ENCODE measurements at regions of chr11 and their contacts with region 1.

Region 1: GRCh38 chr11:114439229-114440120 is at the start of gene REXO2:
- DNase-seq: peak; percentile 87
- H3K4me3 Mint-ChIP-seq: peak within 1 kb of the TSS; percentile 100
- H3K27ac Mint-ChIP-seq: peak within 1 kb of the TSS; percentile 98
- H3K4me1 Mint-ChIP-seq: peaks cover 26% of the 10 kb centered on the region
- H3K27me3 Mint-ChIP-seq: no peaks in the 10 kb centered on the region
- CTCF ChIP-seq: no peak
- total RNA-seq, gene REXO2: 69.1 and 74.2 TPM in 2 replicates

Region 2: GRCh38 chr11:113908098-113908497 is 531.4 kb before region 1 on chr11:
- CTCF ChIA-PET with region 1: no interaction called
- intact Hi-C with region 1: no loop called
- DNase-seq: no peak
- H3K4me3 Mint-ChIP-seq: no peak overlapping the region
- H3K27ac Mint-ChIP-seq: no peak overlapping the region
- H3K4me1 Mint-ChIP-seq: no peaks in the 10 kb centered on the region
- H3K27me3 Mint-ChIP-seq: peaks cover 25% of the 10 kb centered on the region
- CTCF ChIP-seq: no peak

Region 3: GRCh38 chr11:114295676-114296604 is 143.5 kb before region 1 on chr11 and contains the start of gene NNMT:
- CTCF ChIA-PET with region 1: no interaction called
- intact Hi-C with region 1: loop called (anchors 5 kb)
- DNase-seq: peak; percentile 65
- H3K4me3 Mint-ChIP-seq: peak within 1 kb of the TSS; percentile 74
- H3K27ac Mint-ChIP-seq: peak within 1 kb of the TSS; percentile 99
- H3K4me1 Mint-ChIP-seq: peaks cover 53% of the 10 kb centered on the region
- H3K27me3 Mint-ChIP-seq: no peaks in the 10 kb centered on the region
- CTCF ChIP-seq: no peak
- total RNA-seq, gene NNMT: 52.7 and 116 TPM in 2 replicates

Region 4: DNA sequence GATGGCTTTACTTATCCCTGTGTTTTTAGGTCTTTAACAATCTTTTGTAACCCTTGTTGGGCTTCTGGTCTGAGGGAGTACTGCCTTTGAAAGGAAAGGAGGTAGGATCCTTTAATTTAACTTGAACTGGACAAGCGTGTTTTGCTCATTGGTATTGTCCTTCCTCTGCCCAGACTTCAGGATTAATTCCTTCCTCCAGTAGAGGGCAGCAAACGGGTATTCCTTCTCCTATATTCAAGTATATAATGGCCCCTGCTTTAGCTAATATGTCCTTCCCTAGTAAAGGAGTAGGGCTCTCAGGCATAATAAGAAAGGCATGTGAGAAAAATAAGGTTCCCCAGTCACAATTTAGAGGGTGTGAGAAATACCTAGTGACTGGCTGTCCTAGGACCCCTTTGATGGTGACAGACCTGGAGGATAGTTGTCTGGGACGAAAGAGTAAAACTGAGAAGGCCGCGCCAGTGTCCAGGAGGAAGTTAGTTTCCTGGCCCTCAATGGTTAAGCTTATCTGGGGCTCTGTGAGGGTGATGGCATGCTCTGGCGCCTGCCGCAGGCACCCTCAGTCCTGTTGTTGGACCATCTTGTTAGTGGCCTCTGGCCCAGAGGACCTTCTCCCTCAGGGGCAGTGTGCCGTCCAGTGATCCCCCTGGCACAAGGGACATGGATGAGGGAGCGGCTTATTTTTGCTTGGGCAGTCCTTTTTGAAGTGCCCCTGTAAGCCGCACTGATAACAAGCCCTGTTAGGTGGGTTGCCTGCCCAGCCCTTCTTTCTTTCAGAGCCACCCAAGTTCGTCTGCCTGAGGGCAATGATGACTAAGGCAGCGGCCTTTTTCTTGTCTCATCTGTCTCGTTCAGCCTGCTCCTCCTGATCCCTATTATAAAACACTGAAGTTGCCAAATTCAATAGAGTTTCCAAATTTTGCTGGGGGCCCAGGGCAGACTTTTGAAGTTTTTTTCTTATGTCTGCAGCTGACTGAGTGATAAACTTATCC is 91.0 kb before region 1 on chr11:
- CTCF ChIA-PET with region 1: no interaction called
- intact Hi-C with region 1: loop called (anchors 2 kb)
- DNase-seq: peak; percentile 59
- H3K4me3 Mint-ChIP-seq: no peak overlapping the region
- H3K27ac Mint-ChIP-seq: no peak overlapping the region
- H3K4me1 Mint-ChIP-seq: no peaks in the 10 kb centered on the region
- H3K27me3 Mint-ChIP-seq: no peaks in the 10 kb centered on the region
- CTCF ChIP-seq: peak; percentile 19

Region 5: GRCh38 chr11:114452399-114452798 is 12.9 kb after region 1 on chr11:
- CTCF ChIA-PET with region 1: no interaction called
- intact Hi-C with region 1: no loop called
- DNase-seq: no peak
- H3K4me3 Mint-ChIP-seq: no peak overlapping the region
- H3K27ac Mint-ChIP-seq: no peak overlapping the region
- H3K4me1 Mint-ChIP-seq: peaks cover 5% of the 10 kb centered on the region
- H3K27me3 Mint-ChIP-seq: no peaks in the 10 kb centered on the region
- CTCF ChIP-seq: no peak

Region 6: DNA sequence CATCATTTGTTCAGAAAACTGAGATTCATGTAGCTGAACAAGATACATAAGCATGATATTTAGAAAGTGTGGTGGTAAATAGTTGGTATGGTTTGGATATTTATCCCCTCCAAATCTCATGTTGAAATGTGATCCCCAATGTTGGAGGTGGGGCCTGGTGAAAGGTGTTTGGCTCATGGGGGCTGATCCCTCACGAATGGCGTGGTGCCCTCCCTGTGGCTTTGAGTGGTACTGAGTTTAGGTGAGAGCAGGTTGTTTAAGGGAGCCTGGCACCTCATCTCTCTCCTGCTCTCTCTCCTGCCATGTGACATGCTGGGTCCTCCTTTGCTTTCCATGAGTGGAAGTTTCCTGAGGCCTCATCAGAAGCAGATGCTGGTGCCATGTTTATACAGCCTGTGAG is 72.1 kb after region 1 on chr11:
- CTCF ChIA-PET with region 1: no interaction called
- intact Hi-C with region 1: no loop called
- DNase-seq: no peak
- H3K4me3 Mint-ChIP-seq: no peak overlapping the region
- H3K27ac Mint-ChIP-seq: no peak overlapping the region
- H3K4me1 Mint-ChIP-seq: no peaks in the 10 kb centered on the region
- H3K27me3 Mint-ChIP-seq: no peaks in the 10 kb centered on the region
- CTCF ChIP-seq: no peak

Measured in Calu3 (cell line).